Activated B cell treated with CpG ODN at 0.5 μM for 24 hours (primary cell): ENCODE measurements at regions of chr6 and their contacts with region 1.

Region 1: DNA sequence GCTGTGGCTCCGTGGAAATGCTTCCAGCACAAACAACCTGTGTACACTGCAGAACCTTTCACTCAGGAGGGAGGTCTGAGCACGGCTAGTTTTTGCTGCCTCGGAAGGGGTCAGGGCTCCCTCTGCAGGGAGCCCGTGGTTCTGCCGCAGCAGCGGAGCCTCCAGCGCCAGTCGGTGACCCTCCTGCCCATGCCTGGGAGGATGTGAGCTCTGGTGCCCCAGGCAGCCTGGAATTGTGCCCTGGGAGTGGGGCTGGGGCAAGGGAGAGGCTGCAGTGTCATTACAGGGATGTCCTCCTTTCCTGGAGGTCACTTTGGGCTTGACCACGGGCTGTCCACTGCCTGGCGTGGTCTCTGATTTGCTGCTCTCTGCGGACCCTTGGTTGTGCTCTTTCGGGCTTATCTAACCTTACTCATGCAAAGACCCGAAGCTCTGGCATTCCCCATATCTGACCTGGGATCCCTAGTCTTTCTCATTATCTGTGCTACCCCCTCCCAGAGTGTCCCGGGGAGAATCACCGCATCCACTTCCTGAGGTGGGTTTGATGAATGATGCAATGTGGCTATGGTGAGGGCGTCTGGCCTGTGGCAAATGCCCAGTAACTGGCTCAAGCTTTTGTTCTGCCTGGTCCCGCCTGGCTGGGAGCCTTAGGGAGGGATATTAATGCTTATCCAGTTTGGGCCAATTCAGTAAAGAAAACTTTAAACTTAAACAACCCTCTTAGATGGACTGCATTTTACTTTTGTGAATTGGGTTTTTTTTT is 59.6 kb upstream of the TAGAP start:
- DNase-seq: peak; percentile 76
- ATAC-seq: peak; percentile 50
- H3K4me3 Mint-ChIP-seq: peak overlapping the region; percentile 67
- H3K27ac Mint-ChIP-seq: peak overlapping the region; percentile 98
- H3K4me1 Mint-ChIP-seq: peaks cover 91% of the 10 kb centered on the region
- H3K27me3 Mint-ChIP-seq: no peaks in the 10 kb centered on the region
- CTCF ChIP-seq: no peak

Region 2: GRCh38 chr6:158644231-158645063 is 459.9 kb before region 1 on chr6 and contains the start of gene DYNLT1:
- CTCF ChIA-PET with region 1: no interaction called
- POLR2A ChIA-PET with region 1: interaction called, 10 read pairs
- intact Hi-C with region 1: loop called (anchors 5 kb)
- DNase-seq: peak; percentile 97
- ATAC-seq: peak; percentile 68
- H3K4me3 Mint-ChIP-seq: peak within 1 kb of the TSS; percentile 95
- H3K27ac Mint-ChIP-seq: peak within 1 kb of the TSS; percentile 85
- H3K4me1 Mint-ChIP-seq: peaks cover 52% of the 10 kb centered on the region
- H3K27me3 Mint-ChIP-seq: no peaks in the 10 kb centered on the region
- CTCF ChIP-seq: no peak
- total RNA-seq, gene DYNLT1: 37.7 and 43.9 TPM in 2 replicates

Region 3: GRCh38 chr6:158718461-158719046 is 385.8 kb before region 1 on chr6:
- CTCF ChIA-PET with region 1: no interaction called
- POLR2A ChIA-PET with region 1: interaction called, 9 read pairs
- intact Hi-C with region 1: loop called (anchors 5 kb)
- DNase-seq: no peak
- ATAC-seq: no peak
- H3K4me3 Mint-ChIP-seq: no peak overlapping the region
- H3K27ac Mint-ChIP-seq: peak overlapping the region; percentile 97
- H3K4me1 Mint-ChIP-seq: peaks cover 78% of the 10 kb centered on the region
- H3K27me3 Mint-ChIP-seq: no peaks in the 10 kb centered on the region
- CTCF ChIP-seq: no peak

Region 4: DNA sequence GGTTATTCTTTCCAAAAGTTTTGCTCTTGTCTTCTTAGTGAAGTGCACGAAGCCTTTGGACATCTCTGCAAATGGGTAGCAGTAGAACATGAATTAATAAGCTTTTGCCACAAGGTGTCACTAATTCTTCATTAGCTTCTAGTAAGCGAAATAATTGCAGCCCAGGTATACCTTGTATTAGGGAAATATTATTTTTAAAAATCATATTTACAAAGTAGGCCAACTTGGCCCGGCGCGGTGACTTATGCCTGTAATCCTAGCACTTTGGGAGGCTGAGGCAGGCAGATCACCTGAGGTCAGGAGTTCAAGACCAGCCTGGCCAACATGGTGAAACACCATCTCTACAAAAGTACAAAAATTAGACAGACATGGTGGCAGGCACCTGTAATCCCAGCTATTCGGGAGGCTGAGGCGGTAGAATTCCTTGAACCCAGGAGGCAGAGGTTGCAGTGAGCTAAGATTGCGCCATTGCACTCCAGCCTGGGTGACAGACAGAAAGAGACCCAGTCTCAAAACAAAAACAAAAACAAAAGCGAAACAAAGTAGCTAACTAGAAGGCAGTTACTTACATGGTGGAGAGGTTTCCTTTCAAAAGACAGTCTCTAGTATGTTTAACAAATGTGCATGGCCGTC is 95.6 kb before region 1 on chr6:
- CTCF ChIA-PET with region 1: interaction called, 205 read pairs
- POLR2A ChIA-PET with region 1: interaction called, 123 read pairs
- intact Hi-C with region 1: loop called (anchors 1 kb)
- DNase-seq: no peak
- ATAC-seq: peak; percentile 74
- H3K4me3 Mint-ChIP-seq: peak overlapping the region; percentile 5
- H3K27ac Mint-ChIP-seq: peak overlapping the region; percentile 24
- H3K4me1 Mint-ChIP-seq: peaks cover 41% of the 10 kb centered on the region
- H3K27me3 Mint-ChIP-seq: no peaks in the 10 kb centered on the region
- CTCF ChIP-seq: no peak

Region 5: GRCh38 chr6:159062564-159062945 is 41.8 kb before region 1 on chr6:
- CTCF ChIA-PET with region 1: interaction called, 10 read pairs
- POLR2A ChIA-PET with region 1: interaction called, 21 read pairs
- intact Hi-C with region 1: no loop called
- DNase-seq: no peak
- ATAC-seq: peak; percentile 87
- H3K4me3 Mint-ChIP-seq: peak overlapping the region; percentile 50
- H3K27ac Mint-ChIP-seq: peak overlapping the region; percentile 95
- H3K4me1 Mint-ChIP-seq: peaks cover 73% of the 10 kb centered on the region
- H3K27me3 Mint-ChIP-seq: no peaks in the 10 kb centered on the region
- CTCF ChIP-seq: no peak

Region 6: DNA sequence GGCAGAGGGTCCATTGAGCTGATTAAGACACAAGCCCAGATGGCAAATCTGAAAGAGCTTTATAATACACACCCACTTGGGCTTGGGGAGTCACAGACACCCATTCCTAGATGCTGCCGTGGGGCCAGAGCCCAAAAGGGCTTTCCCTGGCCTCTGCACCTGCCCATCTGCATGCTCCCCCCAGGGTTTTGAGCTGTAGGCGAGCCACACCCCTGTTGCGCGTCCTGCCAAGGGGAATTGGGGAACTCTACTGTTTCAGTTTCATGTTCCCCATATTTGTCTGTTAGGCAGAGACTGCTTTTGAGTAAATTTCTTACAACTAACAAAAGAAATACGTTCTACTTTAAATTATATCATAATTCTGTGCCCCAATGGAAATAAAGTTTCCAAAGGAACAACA is 12.0 kb after region 1 on chr6:
- CTCF ChIA-PET with region 1: interaction called, 26 read pairs
- POLR2A ChIA-PET with region 1: interaction called, 145 read pairs
- intact Hi-C with region 1: loop called (anchors 1 kb)
- DNase-seq: peak; percentile 71
- ATAC-seq: peak; percentile 75
- H3K4me3 Mint-ChIP-seq: peak overlapping the region; percentile 63
- H3K27ac Mint-ChIP-seq: peak overlapping the region; percentile 99
- H3K4me1 Mint-ChIP-seq: peaks cover 86% of the 10 kb centered on the region
- H3K27me3 Mint-ChIP-seq: no peaks in the 10 kb centered on the region
- CTCF ChIP-seq: no peak

Region 7: GRCh38 chr6:159134701-159135364 is 30.5 kb after region 1 on chr6:
- CTCF ChIA-PET with region 1: interaction called, 113 read pairs
- POLR2A ChIA-PET with region 1: interaction called, 74 read pairs
- intact Hi-C with region 1: loop called (anchors 1 kb)
- DNase-seq: peak; percentile 63
- ATAC-seq: peak; percentile 98
- H3K4me3 Mint-ChIP-seq: peak overlapping the region; percentile 61
- H3K27ac Mint-ChIP-seq: peak overlapping the region; percentile 80
- H3K4me1 Mint-ChIP-seq: peaks cover 20% of the 10 kb centered on the region
- H3K27me3 Mint-ChIP-seq: peaks cover 4% of the 10 kb centered on the region
- CTCF ChIP-seq: peak; percentile 72